Heart right ventricle (tissue), 16 donors: ENCODE measurements at regions of chr6 and their contacts with region 1.

Region 1: GRCh38 chr6:31386977-31387376 is 16.4 kb upstream of the MICA start:
- DNase-seq: no peak
- ATAC-seq: peak in 2 of 8 donors; percentile 32 to 56
- H3K4me3 ChIP-seq: no peak overlapping the region
- H3K27ac ChIP-seq: no peak overlapping the region
- H3K4me1 ChIP-seq: no peaks in the 10 kb centered on the region
- H3K27me3 ChIP-seq: no peaks in the 10 kb centered on the region
- CTCF ChIP-seq: no peak

Region 2: GRCh38 chr6:31308050-31308844 is 78.7 kb before region 1 on chr6:
- intact Hi-C with region 1: no loop called
- DNase-seq: peak in 1 of 2 donors; percentile 23
- ATAC-seq: peak in 6 of 8 donors; percentile 11 to 61 (median 36)
- H3K4me3 ChIP-seq: peak overlapping the region in 9 of 10 donors; percentile 13 to 53 (median 44)
- H3K27ac ChIP-seq: no peak overlapping the region
- H3K4me1 ChIP-seq: peaks cover 0 to 15% (median 9%) of the 10 kb centered on the region in 9 donors
- H3K27me3 ChIP-seq: peaks cover 0 to 76% (median 40%) of the 10 kb centered on the region in 7 donors
- CTCF ChIP-seq: no peak

Region 3: DNA sequence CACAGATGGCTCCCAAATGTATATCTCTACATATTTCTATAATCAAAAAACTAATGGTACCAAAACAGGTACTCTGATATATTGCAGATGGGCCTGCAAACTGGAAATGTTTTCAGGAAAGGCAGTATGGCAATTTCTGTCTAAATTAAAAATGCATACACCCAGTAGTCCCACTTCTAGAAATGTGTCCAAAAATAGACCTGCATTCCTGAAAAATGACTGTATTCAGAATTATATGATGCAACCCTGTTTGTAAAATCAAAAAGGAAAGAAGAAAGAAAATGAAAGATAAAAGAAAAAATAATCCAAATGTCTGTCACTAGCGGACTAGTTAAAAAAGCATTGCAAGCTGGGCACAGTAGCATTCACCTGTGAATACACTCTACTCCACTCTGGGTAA is 98.1 kb after region 1 on chr6:
- intact Hi-C with region 1: loop called in 2 of 10 experiments (anchors 2 kb)
- DNase-seq: no peak
- ATAC-seq: no peak
- H3K4me3 ChIP-seq: no peak overlapping the region
- H3K27ac ChIP-seq: no peak overlapping the region
- H3K4me1 ChIP-seq: no peaks in the 10 kb centered on the region
- H3K27me3 ChIP-seq: peaks cover 0 to under 1% (median 0%) of the 10 kb centered on the region in 7 donors
- CTCF ChIP-seq: no peak